OCI-LY7 (cell line): ENCODE measurements at regions of chr7 and their contacts with region 1.

Region 1: DNA sequence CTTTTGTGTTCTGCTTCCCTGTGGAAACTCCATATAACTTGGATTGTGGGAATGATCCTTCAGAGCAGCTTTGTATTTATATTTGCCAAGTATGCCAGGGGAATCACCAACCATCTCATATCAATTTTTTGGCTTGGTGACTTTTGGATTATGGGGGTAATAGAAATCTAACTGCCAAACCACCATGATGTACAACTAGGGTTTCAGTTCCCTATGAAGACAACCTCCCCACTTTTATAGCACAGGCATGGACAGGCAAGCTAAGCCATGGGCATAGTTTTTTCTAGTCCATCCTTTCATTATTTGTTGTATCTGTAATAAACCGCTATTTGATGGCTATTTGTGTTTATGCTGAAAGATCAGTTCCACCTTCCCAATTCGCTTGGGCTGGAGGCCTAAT is 17.7 kb downstream of the NPY start:
- DNase-seq: peak; percentile 33
- H3K4me3 ChIP-seq: no peak overlapping the region
- H3K27ac ChIP-seq: no peak overlapping the region
- H3K4me1 ChIP-seq: peaks cover 23% of the 10 kb centered on the region
- CTCF ChIP-seq: no peak

Region 2: DNA sequence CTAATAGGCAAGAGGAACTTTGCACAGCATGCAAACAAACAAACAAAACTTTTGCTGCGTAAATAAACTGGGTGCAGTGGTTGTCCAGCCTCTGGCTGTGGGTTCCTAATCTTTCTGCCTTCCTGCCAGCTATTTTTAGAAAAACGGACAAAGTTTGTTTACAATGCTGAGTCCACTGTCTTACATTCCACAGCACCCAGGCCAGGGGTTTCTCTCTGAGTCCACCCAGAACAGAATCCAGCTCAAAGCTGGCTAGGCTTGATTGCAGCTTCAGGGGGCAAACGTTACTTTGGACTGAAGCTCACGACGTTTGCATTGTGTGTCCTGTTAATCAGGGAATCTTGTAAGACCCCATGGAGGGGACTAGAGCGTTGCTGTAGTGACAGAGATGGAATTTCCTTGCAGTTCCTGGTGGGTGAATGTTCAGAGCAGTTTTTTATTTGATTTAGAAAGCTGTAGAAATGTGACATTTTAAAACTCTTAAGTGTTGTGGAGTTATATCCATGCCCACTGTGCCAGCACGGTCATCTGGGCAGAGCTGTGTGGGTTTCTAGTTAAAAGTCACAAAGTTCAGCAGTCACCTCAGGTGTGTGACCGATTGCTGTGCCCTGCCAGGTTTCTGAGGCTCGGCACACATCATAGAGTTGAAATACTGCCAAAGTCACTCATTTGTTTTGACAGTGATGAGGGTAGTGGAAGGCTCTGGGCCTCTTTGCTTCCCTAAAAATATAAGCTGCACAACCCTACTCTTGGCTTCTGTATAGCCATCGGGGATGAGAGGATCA is 344.7 kb before region 1 on chr7:
- CTCF ChIA-PET with region 1: no interaction called
- POLR2A ChIA-PET with region 1: no interaction called
- intact Hi-C with region 1: no loop called
- DNase-seq: no peak
- H3K4me3 ChIP-seq: no peak overlapping the region
- H3K27ac ChIP-seq: no peak overlapping the region
- H3K4me1 ChIP-seq: no peaks in the 10 kb centered on the region
- CTCF ChIP-seq: no peak

Region 3: DNA sequence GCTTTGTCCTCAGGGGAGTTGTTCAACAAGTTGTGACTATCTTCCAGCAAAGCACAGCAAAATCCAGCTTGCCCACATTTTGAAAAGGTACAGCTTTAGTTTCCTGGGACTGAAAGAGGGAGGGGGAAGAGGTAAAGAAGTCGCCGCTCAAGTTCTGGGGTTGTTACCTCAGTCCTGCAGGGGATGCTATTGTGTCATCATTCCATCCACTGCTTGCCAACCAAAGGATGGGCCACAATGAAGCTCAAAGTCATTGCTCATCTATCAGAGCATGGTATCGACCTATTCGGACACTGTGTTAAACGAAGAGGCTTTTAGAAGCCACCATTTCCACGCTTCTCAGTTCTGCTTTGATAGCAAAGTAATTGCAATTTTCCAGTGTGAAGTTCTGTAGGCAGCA is 16.6 kb after region 1 on chr7:
- CTCF ChIA-PET with region 1: interaction called, 3 read pairs
- POLR2A ChIA-PET with region 1: interaction called, 17 read pairs
- intact Hi-C with region 1: no loop called
- DNase-seq: peak; percentile 75
- H3K4me3 ChIP-seq: no peak overlapping the region
- H3K27ac ChIP-seq: no peak overlapping the region
- H3K4me1 ChIP-seq: peaks cover 29% of the 10 kb centered on the region
- CTCF ChIP-seq: peak; percentile 91

Region 4: GRCh38 chr7:24472093-24472492 is 170.4 kb after region 1 on chr7:
- CTCF ChIA-PET with region 1: no interaction called
- POLR2A ChIA-PET with region 1: no interaction called
- intact Hi-C with region 1: no loop called
- DNase-seq: no peak
- H3K4me3 ChIP-seq: no peak overlapping the region
- H3K27ac ChIP-seq: no peak overlapping the region
- H3K4me1 ChIP-seq: no peaks in the 10 kb centered on the region
- CTCF ChIP-seq: no peak